Right ventricle myocardium inferior (tissue), 1 donor: ENCODE measurements at regions of chr3 and their contacts with region 1.

Region 1: DNA sequence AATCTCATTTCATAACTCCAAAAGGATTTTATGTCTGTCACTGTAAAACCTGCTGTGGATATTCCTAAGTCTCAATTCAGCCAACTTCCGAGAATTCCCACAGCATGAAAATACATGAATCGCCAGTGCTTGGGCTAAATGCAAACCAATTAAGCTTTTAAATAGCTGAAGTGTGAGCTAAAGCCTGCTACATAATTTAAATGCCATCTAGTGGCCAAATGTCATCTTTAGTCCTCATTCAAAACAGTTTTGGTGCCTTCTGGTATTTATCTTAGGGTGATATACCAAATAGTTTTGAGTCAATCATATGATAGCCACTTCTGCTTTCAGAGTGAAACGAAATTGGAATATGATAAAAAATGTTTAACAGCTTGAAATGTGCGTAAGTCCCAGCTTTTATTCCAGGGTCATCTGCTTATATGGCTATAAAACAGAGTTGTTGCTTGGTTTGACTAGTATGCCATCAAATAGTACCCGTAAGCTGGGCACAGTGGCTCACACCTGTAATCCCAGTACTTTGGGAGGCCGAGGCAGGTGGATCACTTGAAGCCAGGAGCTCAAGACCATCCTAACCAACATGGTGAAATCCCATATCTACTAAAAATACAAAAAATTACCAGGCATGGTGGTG is 41.8 kb upstream of the CCNL1 start:
- DNase-seq: no peak
- ATAC-seq: peak; percentile 26

Region 2: DNA sequence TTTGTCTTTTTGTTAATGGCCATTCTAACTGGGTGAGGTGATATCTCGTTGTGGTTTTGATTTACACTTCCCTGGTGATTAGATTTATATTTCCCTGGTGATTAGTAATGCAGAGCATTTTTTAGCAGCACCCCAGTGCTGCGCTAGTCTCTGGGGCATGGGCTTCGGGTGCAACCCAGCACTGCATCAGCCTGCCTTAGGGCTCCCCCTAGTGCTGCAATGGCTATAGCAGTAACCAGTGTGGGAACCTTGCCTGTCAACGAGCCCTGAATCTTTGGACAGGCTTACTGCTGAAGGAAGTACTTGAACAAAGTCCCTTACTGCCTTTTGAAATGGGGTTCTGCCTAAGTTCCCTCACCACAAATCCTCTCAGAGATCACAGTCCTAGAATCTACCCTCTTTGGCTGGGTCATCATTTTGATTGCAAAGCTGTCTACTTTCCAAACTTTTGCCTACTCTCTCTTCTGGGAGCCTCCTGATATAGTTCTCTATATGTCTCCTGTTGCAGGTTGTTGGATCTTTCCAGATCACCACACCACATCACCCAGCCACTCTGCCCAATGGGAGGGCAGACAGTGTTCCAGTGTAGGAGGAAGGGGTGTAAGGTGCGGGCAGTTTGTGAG is 37.4 kb after region 1 on chr3:
- intact Hi-C with region 1: loop called (anchors 5 kb)
- DNase-seq: no peak
- ATAC-seq: peak; percentile 91

Region 3: DNA sequence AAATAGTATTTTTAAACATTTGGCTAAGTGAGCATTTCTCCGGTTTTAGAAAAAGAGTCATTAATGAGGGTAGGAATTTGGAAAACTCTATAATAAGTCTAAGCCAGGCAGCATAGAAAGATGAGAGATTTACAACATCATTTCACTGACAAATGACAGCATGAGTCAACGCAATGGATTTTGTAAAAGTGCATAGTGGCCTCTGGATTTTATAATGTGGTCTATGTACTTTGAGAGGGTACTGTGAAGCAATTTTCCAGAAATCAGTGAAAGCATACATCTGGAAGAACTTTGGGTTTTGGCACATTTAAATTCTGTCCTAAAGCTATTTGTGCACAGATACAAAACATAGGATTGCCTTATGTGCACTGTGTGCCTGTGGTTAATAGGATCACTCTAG is 89.0 kb after region 1 on chr3:
- intact Hi-C with region 1: loop called (anchors 10 kb)
- DNase-seq: no peak
- ATAC-seq: no peak

Region 4: GRCh38 chr3:157493627-157494550 is 292.1 kb after region 1 on chr3:
- intact Hi-C with region 1: loop called (anchors 2 kb)
- DNase-seq: no peak
- ATAC-seq: peak; percentile 26